ENCODE measurements at regions of chr7 and their contacts with region 1.

Region 1: GRCh38 chr7:7681179-7681935 is 37.0 kb downstream of the RPA3 start:
- DNase-seq: no peak
- ATAC-seq: peak; percentile 71 to 93 (median 85)
- H3K4me3 ChIP-seq: peak overlapping the region; percentile 38
- H3K27ac ChIP-seq: peak overlapping the region; percentile 76
- H3K4me1 ChIP-seq: peaks cover 17% of the 10 kb centered on the region
- H3K27me3 ChIP-seq: no peaks in the 10 kb centered on the region
- CTCF ChIP-seq: peak; percentile 68

Region 2: DNA sequence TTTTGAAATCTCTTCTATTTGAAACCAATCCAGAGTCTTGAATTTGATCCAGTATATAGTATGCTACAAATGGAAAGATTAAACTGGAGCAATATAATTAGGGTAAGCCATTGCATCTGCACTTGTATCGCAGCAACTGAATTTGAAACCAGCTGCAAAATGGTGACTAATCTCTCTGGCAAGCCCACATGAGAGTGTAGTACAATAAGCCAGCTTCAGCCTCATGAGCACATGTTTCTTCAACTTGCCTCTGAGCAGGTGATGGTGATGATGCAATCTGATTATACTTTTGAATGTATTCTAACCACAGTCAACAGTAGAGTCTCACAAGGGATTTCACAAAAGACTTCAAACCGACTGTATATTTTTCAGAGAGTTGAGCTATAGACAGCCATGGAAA is 37.9 kb after region 1 on chr7:
- intact Hi-C with region 1: loop called in 1 of 2 experiments (anchors 5 kb)
- DNase-seq: no peak
- ATAC-seq: peak; percentile 97 to 99 (median 99)
- H3K4me3 ChIP-seq: no peak overlapping the region
- H3K27ac ChIP-seq: peak overlapping the region; percentile 71
- H3K4me1 ChIP-seq: peaks cover 12% of the 10 kb centered on the region
- H3K27me3 ChIP-seq: no peaks in the 10 kb centered on the region
- CTCF ChIP-seq: no peak

Region 3: GRCh38 chr7:7761340-7761980 is 80.1 kb after region 1 on chr7:
- intact Hi-C with region 1: loop called (anchors 2 to 5 kb)
- DNase-seq: no peak
- ATAC-seq: peak; percentile 61 to 87 (median 70)
- H3K4me3 ChIP-seq: peak overlapping the region; percentile 60
- H3K27ac ChIP-seq: peak overlapping the region; percentile 25
- H3K4me1 ChIP-seq: peaks cover 19% of the 10 kb centered on the region
- H3K27me3 ChIP-seq: no peaks in the 10 kb centered on the region
- CTCF ChIP-seq: peak; percentile 63

Region 4: DNA sequence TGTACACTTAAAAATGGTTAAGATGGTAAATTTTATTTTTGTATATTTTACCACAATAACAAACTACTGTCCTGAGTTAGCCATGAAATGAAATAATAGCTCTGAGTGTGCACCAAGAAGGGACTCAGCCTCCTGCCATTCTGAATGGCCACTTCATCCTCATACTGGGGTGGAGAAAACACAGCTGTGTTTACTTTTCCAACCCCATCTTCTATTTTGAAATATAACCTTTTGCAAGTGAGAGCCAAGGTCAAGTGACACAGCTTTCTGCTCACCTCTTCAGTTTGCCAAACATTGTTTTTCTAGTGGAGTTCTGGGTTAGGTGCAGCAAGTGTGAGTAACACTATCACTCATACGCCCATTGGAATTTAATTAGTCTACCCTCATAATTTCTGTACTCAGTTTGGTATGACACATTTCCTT is 179.9 kb after region 1 on chr7:
- intact Hi-C with region 1: loop called in 1 of 2 experiments (anchors 10 kb)
- DNase-seq: no peak
- ATAC-seq: peak; percentile 66 to 91 (median 80)
- H3K4me3 ChIP-seq: no peak overlapping the region
- H3K27ac ChIP-seq: peak overlapping the region; percentile 50
- H3K4me1 ChIP-seq: peaks cover 52% of the 10 kb centered on the region
- H3K27me3 ChIP-seq: no peaks in the 10 kb centered on the region
- CTCF ChIP-seq: no peak

Region 5: GRCh38 chr7:7968543-7969305 is 287.4 kb after region 1 on chr7 and contains the start of gene GLCCI1:
- intact Hi-C with region 1: loop called in 1 of 2 experiments (anchors 10 kb)
- DNase-seq: peak; percentile 95 to 97
- ATAC-seq: peak; percentile 98 to 99 (median 99)
- H3K4me3 ChIP-seq: peak within 1 kb of the TSS; percentile 99
- H3K27ac ChIP-seq: peak within 1 kb of the TSS; percentile 96
- H3K4me1 ChIP-seq: peaks cover 15% of the 10 kb centered on the region
- H3K27me3 ChIP-seq: no peaks in the 10 kb centered on the region
- CTCF ChIP-seq: no peak
- total RNA-seq, gene GLCCI1: 2.8 to 8.0 (median 4.1) TPM

Region 6: DNA sequence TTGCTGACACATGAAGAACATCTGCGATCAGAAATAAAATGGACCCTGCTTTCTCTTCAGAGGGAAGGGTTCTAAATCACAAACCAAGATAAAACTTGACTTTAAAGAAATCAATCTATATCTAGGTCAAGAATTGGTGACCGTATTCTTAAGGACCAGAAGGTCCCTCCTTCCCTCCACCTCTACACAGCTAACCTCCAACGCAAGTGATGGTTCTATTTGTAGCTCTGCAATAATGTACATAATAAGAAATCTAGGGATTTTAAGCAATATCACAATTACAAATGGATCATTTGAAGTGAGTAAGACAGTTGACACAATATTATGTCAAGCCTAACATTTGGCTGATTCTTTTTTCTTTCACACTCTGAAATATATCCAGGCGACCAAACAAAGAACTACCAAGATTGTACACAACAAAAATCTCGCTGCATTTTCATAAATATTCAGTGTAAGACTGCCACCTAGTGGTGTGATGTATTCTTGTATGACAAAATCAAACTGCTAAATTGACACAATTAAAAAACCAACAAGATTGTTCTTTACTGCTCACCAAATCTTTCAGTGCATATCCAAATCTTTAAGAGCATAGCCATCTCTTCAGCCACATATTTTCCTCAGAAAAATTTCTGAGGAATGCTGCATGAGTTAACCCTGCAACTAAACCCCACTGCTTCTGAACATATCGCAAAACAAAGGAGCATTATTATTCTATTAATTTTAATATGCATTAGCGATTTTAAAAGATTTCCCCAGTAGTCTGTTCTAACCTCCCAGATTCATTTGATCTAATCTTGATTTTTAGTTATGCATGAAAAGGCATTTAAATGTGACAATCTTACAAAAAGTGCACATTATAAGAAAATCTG is 536.1 kb after region 1 on chr7:
- intact Hi-C with region 1: loop called (anchors 5 kb)
- DNase-seq: no peak
- ATAC-seq: peak; percentile 62 to 79 (median 65)
- H3K4me3 ChIP-seq: no peak overlapping the region
- H3K27ac ChIP-seq: no peak overlapping the region
- H3K4me1 ChIP-seq: no peaks in the 10 kb centered on the region
- H3K27me3 ChIP-seq: no peaks in the 10 kb centered on the region
- CTCF ChIP-seq: peak; percentile 78

Measured in psoas muscle (tissue), 8 donors.